ENCODE measurements at regions of chr17 and their contacts with region 1.

Region 1: GRCh38 chr17:48671697-48672171 is 45.6 kb upstream of the HOXB9 start:
- DNase-seq: peak; percentile 72
- ATAC-seq: peak; percentile 64
- H3K4me3 ChIP-seq: no peak overlapping the region
- H3K4me3 Mint-ChIP-seq: peak overlapping the region; percentile 26
- H3K27ac ChIP-seq: no peak overlapping the region
- H3K27ac Mint-ChIP-seq: no peak overlapping the region
- H3K4me1 ChIP-seq: peaks cover 6 to 7% of the 10 kb centered on the region in 2 donors
- H3K4me1 Mint-ChIP-seq: peaks cover 3% of the 10 kb centered on the region
- H3K27me3 ChIP-seq: peaks cover 0 to 28% (median 16%) of the 10 kb centered on the region in 4 experiments
- H3K27me3 Mint-ChIP-seq: peaks cover 46% of the 10 kb centered on the region
- CTCF ChIP-seq: peak; percentile 87

Region 2: GRCh38 chr17:48791128-48792032 is 119.6 kb after region 1 on chr17:
- CTCF ChIA-PET with region 1: interaction called, 3 read pairs
- POLR2A ChIA-PET with region 1: no interaction called
- intact Hi-C with region 1: loop called (anchors 5 kb)
- DNase-seq: peak; percentile 32
- ATAC-seq: no peak
- H3K4me3 ChIP-seq: no peak overlapping the region
- H3K4me3 Mint-ChIP-seq: no peak overlapping the region
- H3K27ac ChIP-seq: no peak overlapping the region
- H3K27ac Mint-ChIP-seq: no peak overlapping the region
- H3K4me1 ChIP-seq: peaks cover 0 to 10% of the 10 kb centered on the region in 2 donors
- H3K4me1 Mint-ChIP-seq: peaks cover 3% of the 10 kb centered on the region
- H3K27me3 ChIP-seq: peaks cover 0 to 20% (median 3%) of the 10 kb centered on the region in 4 experiments
- H3K27me3 Mint-ChIP-seq: peaks cover 47% of the 10 kb centered on the region
- CTCF ChIP-seq: peak; percentile 33